ENCODE measurements at regions of chr2 and their contacts with region 1.

Region 1: GRCh38 chr2:241659150-241659739 is 21.8 kb downstream of the ATG4B start:
- DNase-seq: peak in 1 of 2 experiments; percentile 65
- H3K4me3 ChIP-seq: no peak overlapping the region
- H3K27ac ChIP-seq: no peak overlapping the region
- H3K4me1 ChIP-seq: no peaks in the 10 kb centered on the region
- H3K27me3 ChIP-seq: no peaks in the 10 kb centered on the region
- CTCF ChIP-seq: peak; percentile 58 to 72 (median 58)
- EP300 ChIP-seq: no peak
- POLR2A ChIP-seq: no peak
- RAD21 ChIP-seq: peak; percentile 64 to 76

Region 2: GRCh38 chr2:241637000-241637791 is 22.0 kb before region 1 on chr2 and contains the starts of genes ATG4B and THAP4:
- CTCF ChIA-PET with region 1: interaction called, 13 read pairs
- POLR2A ChIA-PET with region 1: interaction called, 3 read pairs
- DNase-seq: peak; percentile 73 to 90
- H3K4me3 ChIP-seq: peak within 1 kb of the TSS; percentile 73 to 91 (median 86)
- H3K27ac ChIP-seq: peak within 1 kb of the TSS; percentile 97
- H3K4me1 ChIP-seq: peaks cover 0 to 10% (median 6%) of the 10 kb centered on the region in 4 experiments; a peak in 6 of 7 replicates
- H3K27me3 ChIP-seq: no peaks in the 10 kb centered on the region
- CTCF ChIP-seq: no peak; a peak in 1 of 4 replicates
- EP300 ChIP-seq: no peak; a peak in 1 of 3 replicates
- POLR2A ChIP-seq: peak; percentile 57 to 92
- RAD21 ChIP-seq: no peak
- total RNA-seq, gene ATG4B: 93.7 and 103 TPM in 2 replicates
- total RNA-seq, gene THAP4: 78.9 and 82.8 TPM in 2 replicates

Region 3: GRCh38 chr2:241728000-241728399 is 68.8 kb after region 1 on chr2:
- CTCF ChIA-PET with region 1: no interaction called
- POLR2A ChIA-PET with region 1: no interaction called
- DNase-seq: no peak
- H3K4me3 ChIP-seq: no peak overlapping the region
- H3K27ac ChIP-seq: no peak overlapping the region
- H3K4me1 ChIP-seq: no peaks in the 10 kb centered on the region
- H3K27me3 ChIP-seq: no peaks in the 10 kb centered on the region
- CTCF ChIP-seq: no peak
- EP300 ChIP-seq: no peak
- POLR2A ChIP-seq: no peak
- RAD21 ChIP-seq: no peak